PC-9 (cell line): ENCODE measurements at regions of chr17 and their contacts with region 1.

Region 1: DNA sequence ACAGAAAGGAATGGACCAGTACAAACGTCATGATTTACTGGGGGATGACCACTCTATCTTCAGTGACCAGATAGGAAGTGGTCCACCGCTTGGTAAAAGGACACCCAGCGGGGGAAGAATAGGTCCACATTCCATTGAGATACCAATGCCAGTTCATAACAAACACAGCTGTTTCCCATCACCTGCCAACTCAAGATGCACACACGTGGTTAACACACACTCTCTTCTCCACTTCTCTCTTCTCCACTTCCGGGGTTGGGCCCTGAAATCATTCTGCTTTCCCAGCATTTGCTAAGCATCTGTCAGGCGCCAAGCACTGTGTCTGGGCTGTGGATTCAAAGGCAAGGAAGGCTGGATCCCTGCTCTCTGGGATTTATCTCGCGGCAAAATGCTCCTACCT is 175.5 kb downstream of the SLC39A11 start:
- DNase-seq: no peak
- H3K4me3 ChIP-seq: no peak overlapping the region
- H3K27ac ChIP-seq: no peak overlapping the region
- H3K4me1 ChIP-seq: no peaks in the 10 kb centered on the region
- H3K27me3 ChIP-seq: no peaks in the 10 kb centered on the region
- CTCF ChIP-seq: no peak

Region 2: GRCh38 chr17:72764632-72765041 is 152.4 kb before region 1 on chr17:
- CTCF ChIA-PET with region 1: no interaction called
- POLR2A ChIA-PET with region 1: no interaction called
- intact Hi-C with region 1: no loop called
- DNase-seq: no peak
- H3K4me3 ChIP-seq: no peak overlapping the region
- H3K27ac ChIP-seq: no peak overlapping the region
- H3K4me1 ChIP-seq: no peaks in the 10 kb centered on the region
- H3K27me3 ChIP-seq: no peaks in the 10 kb centered on the region
- CTCF ChIP-seq: no peak

Region 3: DNA sequence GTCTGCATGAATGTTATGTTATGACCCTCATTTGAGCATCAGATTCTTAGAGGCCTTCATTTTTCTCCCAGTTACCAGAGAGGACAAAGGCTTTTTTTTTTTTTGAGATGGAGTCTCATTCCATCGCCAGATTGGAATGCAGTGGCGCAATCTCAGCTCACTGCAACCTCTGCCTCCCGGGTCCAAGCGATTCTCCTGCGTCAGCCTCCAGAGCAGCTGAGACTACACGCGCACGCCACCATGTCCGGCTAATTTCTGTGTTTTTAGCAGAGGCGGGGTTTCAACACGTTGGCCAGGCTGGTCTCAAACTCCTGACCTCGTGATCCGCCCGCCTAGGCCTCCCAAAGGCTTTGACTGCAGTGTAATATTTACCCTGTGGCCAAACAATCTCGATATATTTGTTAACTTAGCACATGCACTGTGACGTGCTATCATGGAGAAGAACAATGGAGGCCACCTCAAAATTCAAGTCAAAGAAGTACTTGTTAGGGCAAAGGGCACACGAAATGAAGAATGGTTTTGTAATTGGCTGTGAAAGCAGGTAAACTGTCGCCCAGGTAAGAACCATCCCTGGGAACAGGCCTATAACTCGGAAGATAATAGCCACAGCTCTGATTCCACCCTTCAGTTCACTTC is 127.9 kb before region 1 on chr17:
- CTCF ChIA-PET with region 1: no interaction called
- POLR2A ChIA-PET with region 1: interaction called, 12 read pairs
- intact Hi-C with region 1: no loop called
- DNase-seq: peak in 1 of 2 experiments; percentile 17
- H3K4me3 ChIP-seq: no peak overlapping the region
- H3K27ac ChIP-seq: no peak overlapping the region
- H3K4me1 ChIP-seq: no peaks in the 10 kb centered on the region
- H3K27me3 ChIP-seq: no peaks in the 10 kb centered on the region
- CTCF ChIP-seq: no peak

Region 4: DNA sequence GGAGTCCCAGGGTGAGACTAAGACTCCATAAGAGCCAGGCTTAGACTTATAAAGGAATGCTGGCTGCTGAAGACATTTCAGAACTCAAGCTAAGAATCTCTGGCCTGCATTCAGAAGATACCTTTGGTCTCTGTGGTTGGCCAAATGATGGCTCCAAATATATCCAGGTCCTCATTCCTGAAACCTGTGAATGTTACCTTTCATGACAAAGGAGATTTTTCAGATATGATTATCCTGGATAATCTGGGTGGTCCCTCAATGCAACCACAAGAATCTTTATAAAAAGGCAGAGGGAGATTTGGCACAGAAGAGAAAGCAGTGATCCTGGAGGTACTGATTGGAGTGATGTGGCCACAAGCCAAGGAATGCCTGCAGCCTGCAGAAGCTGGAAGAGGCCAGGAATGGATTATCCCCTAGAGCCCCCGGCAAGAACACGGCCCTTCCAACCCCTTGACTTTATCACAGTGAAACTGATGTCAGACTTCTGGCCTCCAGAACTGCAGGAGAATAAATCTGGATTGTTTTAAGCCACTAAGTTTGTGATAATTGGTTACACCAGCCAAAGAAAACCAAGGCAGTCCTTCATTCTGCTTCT is 77.8 kb before region 1 on chr17:
- CTCF ChIA-PET with region 1: no interaction called
- POLR2A ChIA-PET with region 1: no interaction called
- intact Hi-C with region 1: no loop called
- DNase-seq: no peak
- H3K4me3 ChIP-seq: no peak overlapping the region
- H3K27ac ChIP-seq: no peak overlapping the region
- H3K4me1 ChIP-seq: no peaks in the 10 kb centered on the region
- H3K27me3 ChIP-seq: no peaks in the 10 kb centered on the region
- CTCF ChIP-seq: no peak

Region 5: DNA sequence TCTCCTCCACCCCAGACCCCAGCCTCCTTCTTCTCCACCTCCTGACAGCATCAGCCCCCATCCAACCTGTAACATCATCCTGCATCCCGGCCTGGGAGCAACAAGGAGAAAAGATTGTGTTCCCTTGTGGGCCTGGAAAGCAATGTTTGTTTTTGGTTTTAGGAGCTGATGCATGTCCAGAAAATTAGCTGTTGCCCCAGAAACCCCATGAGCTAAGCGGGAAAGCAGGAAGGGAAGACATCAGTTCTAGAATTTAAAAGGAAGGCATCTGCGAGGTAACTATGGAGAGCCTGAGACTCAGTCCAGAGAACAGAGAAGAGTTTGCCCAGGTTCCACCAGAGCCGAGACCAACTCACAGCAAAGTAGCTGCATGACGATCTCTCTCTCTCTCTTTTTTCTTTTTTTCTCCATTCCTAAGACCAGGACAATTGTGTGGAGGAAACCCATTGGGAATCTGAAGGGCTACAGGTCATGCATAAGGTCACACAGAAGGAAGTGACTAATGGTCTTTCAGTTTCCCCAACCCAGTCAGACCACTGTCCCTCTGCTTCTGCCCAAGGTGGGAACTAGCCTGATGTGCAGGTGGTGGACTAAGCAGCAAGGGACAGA is 51.1 kb after region 1 on chr17:
- CTCF ChIA-PET with region 1: no interaction called
- POLR2A ChIA-PET with region 1: interaction called, 24 read pairs
- intact Hi-C with region 1: no loop called
- DNase-seq: no peak
- H3K4me3 ChIP-seq: no peak overlapping the region
- H3K27ac ChIP-seq: no peak overlapping the region
- H3K4me1 ChIP-seq: peaks cover 11% of the 10 kb centered on the region
- H3K27me3 ChIP-seq: no peaks in the 10 kb centered on the region
- CTCF ChIP-seq: no peak

Region 6: DNA sequence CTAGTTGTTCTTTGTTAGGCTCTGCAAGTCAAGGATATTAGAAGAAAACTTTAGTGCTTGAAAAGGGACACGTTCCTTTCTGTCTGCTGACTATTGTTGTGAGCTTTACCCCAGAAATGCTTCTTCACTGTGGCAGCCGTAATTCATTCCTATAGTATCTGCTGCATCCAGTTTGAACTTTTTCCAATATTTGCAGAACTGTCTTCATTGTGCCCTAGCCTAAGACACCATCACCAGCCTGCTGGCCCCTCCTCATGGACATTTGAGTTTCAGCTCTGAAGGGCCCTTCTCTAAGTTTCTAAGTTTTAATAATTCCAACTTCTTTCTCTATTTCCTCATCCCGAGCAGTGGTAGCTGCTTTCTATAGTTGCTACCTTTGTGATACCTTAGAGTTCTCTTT is 83.8 kb after region 1 on chr17:
- CTCF ChIA-PET with region 1: no interaction called
- POLR2A ChIA-PET with region 1: interaction called, 16 read pairs
- intact Hi-C with region 1: no loop called
- DNase-seq: no peak
- H3K4me3 ChIP-seq: no peak overlapping the region
- H3K27ac ChIP-seq: no peak overlapping the region
- H3K4me1 ChIP-seq: peaks cover 9% of the 10 kb centered on the region
- H3K27me3 ChIP-seq: no peaks in the 10 kb centered on the region
- CTCF ChIP-seq: no peak

Region 7: DNA sequence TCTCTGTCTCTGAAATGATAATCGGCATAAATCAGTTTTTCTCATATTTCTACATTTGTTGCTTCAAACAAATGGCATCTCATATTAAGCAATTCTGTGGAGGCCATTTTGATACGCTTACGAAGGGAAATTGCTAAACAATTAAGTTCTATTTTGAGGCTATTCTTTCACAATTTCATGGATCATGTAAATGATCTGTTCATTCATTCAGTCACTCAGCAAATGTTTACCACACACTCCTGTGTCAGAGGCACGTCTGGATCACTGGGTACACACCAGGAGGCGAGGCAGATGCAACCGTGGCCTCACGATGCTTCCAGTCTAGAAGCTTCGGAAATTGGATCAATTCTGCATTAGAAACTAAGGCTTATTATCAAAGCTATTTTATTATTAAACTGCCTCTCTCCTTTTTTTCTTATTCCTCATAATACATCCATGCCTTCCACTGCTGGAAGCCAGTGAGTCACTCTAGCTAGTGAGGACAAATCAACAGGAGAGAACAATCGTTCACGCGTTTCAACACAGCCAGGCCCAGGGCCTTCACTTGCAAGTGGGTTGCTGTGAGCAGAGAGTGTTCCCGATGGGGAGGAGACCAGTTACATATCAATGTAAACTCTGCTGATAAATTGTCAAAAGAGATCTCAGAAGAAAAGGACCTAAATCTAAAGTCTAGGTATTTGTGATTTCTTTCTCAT is 186.8 kb after region 1 on chr17:
- CTCF ChIA-PET with region 1: no interaction called
- POLR2A ChIA-PET with region 1: no interaction called
- intact Hi-C with region 1: no loop called
- DNase-seq: no peak
- H3K4me3 ChIP-seq: no peak overlapping the region
- H3K27ac ChIP-seq: no peak overlapping the region
- H3K4me1 ChIP-seq: no peaks in the 10 kb centered on the region
- H3K27me3 ChIP-seq: no peaks in the 10 kb centered on the region
- CTCF ChIP-seq: no peak